ENCODE measurements at regions of chr15 and their contacts with region 1.

Region 1: GRCh38 chr15:75453703-75454470 is 2.4 kb upstream of the SIN3A start:
- DNase-seq: peak; percentile 93
- ATAC-seq: peak; percentile 38
- H3K4me3 Mint-ChIP-seq: peak overlapping the region; percentile 93
- H3K27ac Mint-ChIP-seq: peak overlapping the region; percentile 97
- H3K4me1 Mint-ChIP-seq: peaks cover 41% of the 10 kb centered on the region
- H3K27me3 Mint-ChIP-seq: no peaks in the 10 kb centered on the region
- CTCF ChIP-seq: no peak

Region 2: GRCh38 chr15:74396445-74397238 is 1057.2 kb before region 1 on chr15:
- CTCF ChIA-PET with region 1: no interaction called
- POLR2A ChIA-PET with region 1: interaction called, 3 read pairs
- intact Hi-C with region 1: loop called (anchors 2 kb)
- DNase-seq: peak; percentile 72
- ATAC-seq: peak; percentile 66
- H3K4me3 Mint-ChIP-seq: peak overlapping the region; percentile 80
- H3K27ac Mint-ChIP-seq: peak overlapping the region; percentile 99
- H3K4me1 Mint-ChIP-seq: peaks cover 100% of the 10 kb centered on the region
- H3K27me3 Mint-ChIP-seq: no peaks in the 10 kb centered on the region
- CTCF ChIP-seq: no peak

Region 3: DNA sequence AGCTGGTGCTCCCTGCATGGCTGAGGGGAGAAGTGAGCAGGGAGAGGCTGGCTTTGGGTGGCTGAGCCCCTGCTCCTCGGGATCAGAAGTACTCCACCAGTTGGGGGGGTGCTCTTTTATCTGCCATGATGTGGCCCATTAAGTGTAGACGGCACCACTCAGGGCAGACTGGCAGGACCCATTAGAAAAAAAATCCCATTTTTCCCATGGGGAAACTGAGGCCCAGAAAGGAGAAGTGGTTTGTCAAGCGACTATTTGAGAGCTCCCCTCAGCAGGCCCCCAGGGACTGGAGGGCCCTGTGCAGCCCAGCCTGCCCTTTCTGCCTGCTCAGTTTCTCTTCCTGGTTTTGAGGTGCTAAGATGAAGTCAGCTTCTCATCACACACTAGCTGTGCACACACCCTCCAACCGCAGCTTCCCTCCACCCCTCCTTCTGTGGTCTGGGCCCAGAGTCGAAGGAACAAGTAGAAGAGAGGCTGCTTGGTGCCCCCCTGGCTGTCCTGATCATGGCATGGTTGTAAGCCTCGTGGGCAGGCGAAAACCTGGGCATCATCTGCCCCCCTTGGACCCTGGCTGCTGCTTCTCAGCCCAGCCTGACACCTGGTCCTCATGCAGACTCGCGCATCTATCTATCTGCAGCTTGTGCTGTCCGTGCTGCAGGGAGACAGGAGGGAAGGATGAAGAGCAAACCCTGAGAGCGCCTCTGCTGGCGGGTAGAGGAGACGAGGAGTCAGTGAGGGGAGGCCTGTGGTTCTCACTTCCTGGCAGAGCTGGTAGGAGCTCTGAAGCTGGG is 666.4 kb before region 1 on chr15:
- CTCF ChIA-PET with region 1: no interaction called
- POLR2A ChIA-PET with region 1: interaction called, 20 read pairs
- intact Hi-C with region 1: loop called (anchors 5 kb)
- DNase-seq: peak; percentile 82
- ATAC-seq: peak; percentile 60
- H3K4me3 Mint-ChIP-seq: peak overlapping the region; percentile 89
- H3K27ac Mint-ChIP-seq: peak overlapping the region; percentile 99
- H3K4me1 Mint-ChIP-seq: peaks cover 90% of the 10 kb centered on the region
- H3K27me3 Mint-ChIP-seq: no peaks in the 10 kb centered on the region
- CTCF ChIP-seq: no peak

Region 4: GRCh38 chr15:75104804-75105535 is 348.9 kb before region 1 on chr15:
- CTCF ChIA-PET with region 1: no interaction called
- POLR2A ChIA-PET with region 1: interaction called, 5 read pairs
- intact Hi-C with region 1: loop called (anchors 2 kb)
- DNase-seq: no peak
- ATAC-seq: peak; percentile 47
- H3K4me3 Mint-ChIP-seq: peak overlapping the region; percentile 56
- H3K27ac Mint-ChIP-seq: peak overlapping the region; percentile 80
- H3K4me1 Mint-ChIP-seq: peaks cover 61% of the 10 kb centered on the region
- H3K27me3 Mint-ChIP-seq: peaks cover 5% of the 10 kb centered on the region
- CTCF ChIP-seq: no peak

Region 5: GRCh38 chr15:75182187-75183131 is 271.4 kb before region 1 on chr15:
- CTCF ChIA-PET with region 1: no interaction called
- POLR2A ChIA-PET with region 1: no interaction called
- intact Hi-C with region 1: no loop called
- DNase-seq: no peak
- ATAC-seq: no peak
- H3K4me3 Mint-ChIP-seq: no peak overlapping the region
- H3K27ac Mint-ChIP-seq: no peak overlapping the region
- H3K4me1 Mint-ChIP-seq: peaks cover 19% of the 10 kb centered on the region
- H3K27me3 Mint-ChIP-seq: peaks cover 32% of the 10 kb centered on the region
- CTCF ChIP-seq: no peak

Region 6: GRCh38 chr15:75389791-75390382 is 64.0 kb before region 1 on chr15:
- CTCF ChIA-PET with region 1: no interaction called
- POLR2A ChIA-PET with region 1: interaction called, 3 read pairs
- intact Hi-C with region 1: loop called (anchors 2 kb)
- DNase-seq: no peak
- ATAC-seq: no peak
- H3K4me3 Mint-ChIP-seq: no peak overlapping the region
- H3K27ac Mint-ChIP-seq: no peak overlapping the region
- H3K4me1 Mint-ChIP-seq: peaks cover 24% of the 10 kb centered on the region
- H3K27me3 Mint-ChIP-seq: no peaks in the 10 kb centered on the region
- CTCF ChIP-seq: no peak

Region 7: GRCh38 chr15:75625542-75626347 is 171.9 kb after region 1 on chr15 and contains the start of gene SNUPN:
- CTCF ChIA-PET with region 1: no interaction called
- POLR2A ChIA-PET with region 1: interaction called, 69 read pairs
- intact Hi-C with region 1: loop called (anchors 1 kb)
- DNase-seq: peak; percentile 78
- ATAC-seq: peak; percentile 93
- H3K4me3 Mint-ChIP-seq: peak within 1 kb of the TSS; percentile 96
- H3K27ac Mint-ChIP-seq: peak within 1 kb of the TSS; percentile 98
- H3K4me1 Mint-ChIP-seq: peaks cover 19% of the 10 kb centered on the region
- H3K27me3 Mint-ChIP-seq: no peaks in the 10 kb centered on the region
- CTCF ChIP-seq: no peak
- total RNA-seq, gene SNUPN: 20.5 and 20.8 TPM in 2 replicates

Region 8: GRCh38 chr15:75842722-75843551 is 389.1 kb after region 1 on chr15 and contains the start of gene UBE2Q2:
- CTCF ChIA-PET with region 1: no interaction called
- POLR2A ChIA-PET with region 1: interaction called, 7 read pairs
- intact Hi-C with region 1: loop called (anchors 2 kb)
- DNase-seq: peak; percentile 65
- ATAC-seq: peak; percentile 62
- H3K4me3 Mint-ChIP-seq: peak within 1 kb of the TSS; percentile 94
- H3K27ac Mint-ChIP-seq: peak within 1 kb of the TSS; percentile 93
- H3K4me1 Mint-ChIP-seq: peaks cover 35% of the 10 kb centered on the region
- H3K27me3 Mint-ChIP-seq: no peaks in the 10 kb centered on the region
- CTCF ChIP-seq: no peak
- total RNA-seq, gene UBE2Q2: 16.9 and 23.2 TPM in 2 replicates